Dorsolateral prefrontal cortex (tissue), 120 donors: ENCODE measurements at regions of chr1 and their contacts with region 1.

Region 1: DNA sequence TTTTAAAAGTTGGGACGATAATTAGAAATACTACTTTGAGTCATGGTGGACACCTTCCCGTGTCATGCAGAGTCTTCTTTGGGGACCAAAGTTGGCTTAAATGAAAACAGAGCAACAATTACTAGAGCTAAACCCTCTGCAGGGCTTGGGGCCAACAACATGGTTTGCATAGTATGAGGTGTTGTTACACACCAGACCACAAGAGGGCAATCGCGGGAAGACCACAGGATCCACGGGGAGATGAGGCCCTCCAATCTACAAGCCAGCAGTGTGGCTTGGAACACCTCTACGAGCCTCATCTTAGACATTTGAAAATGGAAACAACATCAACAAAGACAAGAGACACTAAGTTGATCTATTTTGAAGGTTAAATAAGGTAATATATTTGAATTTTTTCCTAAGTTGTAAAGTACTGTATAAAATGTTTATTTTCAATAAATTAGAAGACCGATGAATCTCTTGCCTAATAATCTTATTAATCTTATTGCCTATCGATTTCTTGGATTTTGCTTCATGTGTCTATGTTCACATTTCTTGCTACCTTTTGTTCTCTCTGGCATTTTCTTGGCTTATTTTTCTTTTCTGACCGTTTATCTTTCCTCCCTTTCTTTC is 8.2 kb upstream of the SMCP start:
- DNase-seq: peak in 8 of 10 donors; percentile 10 to 70 (median 60)
- H3K4me3 ChIP-seq: no peak overlapping the region
- H3K27ac ChIP-seq: no peak overlapping the region
- H3K27me3 ChIP-seq: peaks cover 0 to 6% (median 0%) of the 10 kb centered on the region in 45 donors
- CTCF ChIP-seq: peak; percentile 57 to 89 (median 78)

Region 2: DNA sequence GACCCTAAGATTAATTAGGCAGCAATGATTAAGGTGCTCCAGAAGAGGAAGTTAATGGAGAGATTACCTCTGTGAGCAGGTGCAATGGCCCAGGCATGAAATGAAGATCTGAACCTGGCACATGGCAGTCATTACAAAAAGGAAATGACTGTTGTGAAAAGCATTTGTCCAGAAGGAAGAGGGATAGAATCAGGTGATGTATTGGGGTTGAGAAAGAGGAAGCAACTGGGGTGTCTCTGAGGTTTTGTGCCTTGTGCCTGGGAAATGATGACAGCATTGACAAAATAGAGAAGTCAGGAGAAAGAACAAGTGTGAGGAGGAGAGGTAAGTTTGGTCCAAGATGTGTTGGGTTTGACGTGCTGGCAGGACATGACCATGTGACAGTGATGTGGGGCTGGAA is 350.1 kb before region 1 on chr1:
- intact Hi-C with region 1: no loop called
- DNase-seq: no peak
- H3K4me3 ChIP-seq: no peak overlapping the region
- H3K27ac ChIP-seq: no peak overlapping the region
- H3K27me3 ChIP-seq: peaks cover 0 to 33% (median 14%) of the 10 kb centered on the region in 45 donors
- CTCF ChIP-seq: no peak

Region 3: GRCh38 chr1:152654110-152654509 is 215.8 kb before region 1 on chr1:
- intact Hi-C with region 1: loop called in 1 of 2 experiments (anchors 5 kb)
- DNase-seq: peak in 8 of 10 donors; percentile 6 to 70 (median 45)
- H3K4me3 ChIP-seq: no peak overlapping the region
- H3K27ac ChIP-seq: no peak overlapping the region
- H3K27me3 ChIP-seq: peaks cover 0 to 6% (median 0%) of the 10 kb centered on the region in 45 donors
- CTCF ChIP-seq: peak; percentile 20 to 74 (median 60)